IMR-90 (cell line): ENCODE measurements at regions of chr2 and their contacts with region 1.

Region 1: GRCh38 chr2:234446404-234447076 is 50.3 kb downstream of the ARL4C start:
- DNase-seq: no peak
- ATAC-seq: no peak
- H3K4me3 ChIP-seq: no peak overlapping the region
- H3K27ac ChIP-seq: no peak overlapping the region
- H3K4me1 ChIP-seq: peaks cover 25% of the 10 kb centered on the region
- H3K27me3 ChIP-seq: no peaks in the 10 kb centered on the region
- CTCF ChIP-seq: no peak
- POLR2A ChIP-seq: no peak
- RAD21 ChIP-seq: no peak

Region 2: GRCh38 chr2:234399451-234400246 is 46.9 kb before region 1 on chr2:
- CTCF ChIA-PET with region 1: interaction called, 3 read pairs
- POLR2A ChIA-PET with region 1: no interaction called
- dilution Hi-C with region 1: no loop called
- in situ Hi-C with region 1: no loop called
- intact Hi-C with region 1: loop called (anchors 2 kb)
- DNase-seq: peak; percentile 48
- ATAC-seq: peak; percentile 69
- H3K4me3 ChIP-seq: no peak overlapping the region
- H3K27ac ChIP-seq: no peak overlapping the region
- H3K4me1 ChIP-seq: no peaks in the 10 kb centered on the region; the same call in 1 of the 2 replicates
- H3K27me3 ChIP-seq: no peaks in the 10 kb centered on the region
- CTCF ChIP-seq: no peak
- POLR2A ChIP-seq: no peak
- RAD21 ChIP-seq: no peak

Region 3: DNA sequence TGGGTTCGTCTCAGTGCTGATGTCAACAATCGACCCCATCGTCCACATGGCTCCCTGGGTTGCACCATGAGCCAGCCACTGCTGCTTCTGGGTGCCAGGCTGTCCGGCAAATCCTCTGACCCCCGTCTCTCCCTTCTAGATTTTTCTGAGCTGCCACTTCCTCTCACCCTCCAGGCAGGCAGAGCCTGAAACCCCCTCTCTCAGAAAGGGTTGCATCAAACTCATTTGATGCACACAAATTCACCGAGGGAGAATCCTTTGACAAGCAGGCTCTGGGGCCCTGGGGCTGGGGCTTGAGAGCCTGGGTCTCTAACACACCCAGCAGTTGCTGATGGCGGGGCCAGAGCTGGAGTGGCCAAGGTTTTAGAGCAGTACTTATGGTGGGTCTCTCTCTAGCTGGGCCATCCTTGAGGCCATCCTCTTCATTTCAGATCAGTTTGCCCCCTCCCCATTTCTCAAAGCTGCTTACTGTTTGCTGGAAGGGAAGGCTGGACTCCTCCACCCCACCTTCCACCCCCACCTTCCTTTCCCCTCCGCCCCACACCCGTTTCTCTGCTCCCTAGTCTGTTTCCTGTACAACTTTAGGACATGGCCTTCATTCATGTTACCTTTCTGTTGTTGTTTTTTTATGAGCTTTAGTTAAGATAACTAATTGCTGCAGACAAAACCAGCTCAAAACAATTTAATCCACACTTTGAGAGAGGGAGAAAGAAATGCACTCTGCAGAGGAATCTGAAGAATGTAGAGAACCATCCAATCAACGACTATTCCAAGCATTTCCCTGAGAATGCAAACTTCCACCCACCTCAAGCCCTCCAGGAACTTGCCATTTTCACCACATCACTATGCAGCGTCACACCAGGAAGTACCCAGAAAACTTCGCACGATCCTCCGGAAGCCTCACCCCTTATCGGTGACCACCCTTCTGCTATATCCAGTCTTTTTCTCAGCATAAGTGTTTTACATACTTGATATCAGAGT is 19.2 kb before region 1 on chr2:
- CTCF ChIA-PET with region 1: interaction called, 3 read pairs
- POLR2A ChIA-PET with region 1: no interaction called
- dilution Hi-C with region 1: no loop called
- in situ Hi-C with region 1: no loop called
- intact Hi-C with region 1: loop called (anchors 1 kb)
- DNase-seq: peak; percentile 90
- ATAC-seq: peak; percentile 93
- H3K4me3 ChIP-seq: no peak overlapping the region
- H3K27ac ChIP-seq: peak overlapping the region; percentile 39
- H3K4me1 ChIP-seq: peaks cover 18% of the 10 kb centered on the region
- H3K27me3 ChIP-seq: no peaks in the 10 kb centered on the region
- CTCF ChIP-seq: no peak
- POLR2A ChIP-seq: no peak
- RAD21 ChIP-seq: no peak

Region 4: GRCh38 chr2:234494361-234495250 is 48.1 kb after region 1 on chr2:
- CTCF ChIA-PET with region 1: interaction called, 3 read pairs
- POLR2A ChIA-PET with region 1: no interaction called
- dilution Hi-C with region 1: no loop called
- in situ Hi-C with region 1: no loop called
- intact Hi-C with region 1: loop called (anchors 2 kb)
- DNase-seq: peak; percentile 66
- ATAC-seq: no peak
- H3K4me3 ChIP-seq: peak overlapping the region; percentile 84
- H3K27ac ChIP-seq: no peak overlapping the region
- H3K4me1 ChIP-seq: peaks cover 5% of the 10 kb centered on the region
- H3K27me3 ChIP-seq: no peaks in the 10 kb centered on the region
- CTCF ChIP-seq: no peak
- POLR2A ChIP-seq: no peak
- RAD21 ChIP-seq: no peak

Region 5: GRCh38 chr2:234550511-234551107 is 104.1 kb after region 1 on chr2:
- CTCF ChIA-PET with region 1: no interaction called
- POLR2A ChIA-PET with region 1: no interaction called
- dilution Hi-C with region 1: no loop called
- in situ Hi-C with region 1: no loop called
- intact Hi-C with region 1: no loop called
- DNase-seq: peak; percentile 86
- ATAC-seq: peak; percentile 96
- H3K4me3 ChIP-seq: no peak overlapping the region
- H3K27ac ChIP-seq: no peak overlapping the region
- H3K4me1 ChIP-seq: peaks cover 5% of the 10 kb centered on the region; the same call in 1 of the 2 replicates
- H3K27me3 ChIP-seq: no peaks in the 10 kb centered on the region; the same call in 1 of the 2 replicates
- CTCF ChIP-seq: peak; percentile 96
- POLR2A ChIP-seq: peak; percentile 47; the same call in 1 of the 2 replicates
- RAD21 ChIP-seq: peak; percentile 99

Region 6: GRCh38 chr2:234981197-234982117 is 534.9 kb after region 1 on chr2:
- CTCF ChIA-PET with region 1: no interaction called
- POLR2A ChIA-PET with region 1: no interaction called
- dilution Hi-C with region 1: no loop called
- in situ Hi-C with region 1: no loop called
- intact Hi-C with region 1: loop called (anchors 10 kb)
- DNase-seq: peak; percentile 100
- ATAC-seq: peak; percentile 82
- H3K4me3 ChIP-seq: no peak overlapping the region
- H3K27ac ChIP-seq: peak overlapping the region; percentile 86
- H3K4me1 ChIP-seq: peaks cover 54% of the 10 kb centered on the region
- H3K27me3 ChIP-seq: no peaks in the 10 kb centered on the region
- CTCF ChIP-seq: peak; percentile 44
- POLR2A ChIP-seq: peak; percentile 71
- RAD21 ChIP-seq: peak; percentile 46